ENCODE measurements at regions of chr6 and their contacts with region 1.

Region 1: GRCh38 chr6:157034436-157035230 is 257.5 kb downstream of the ARID1B start:
- DNase-seq: peak in 6 of 9 donors; percentile 43 to 57 (median 52)
- ATAC-seq: peak; percentile 85
- H3K4me3 ChIP-seq: no peak overlapping the region
- H3K4me3 Mint-ChIP-seq: peak overlapping the region; percentile 44 to 99 (median 84)
- H3K27ac ChIP-seq: peak overlapping the region; percentile 77
- H3K27ac Mint-ChIP-seq: peak overlapping the region; percentile 44 to 95 (median 84)
- H3K4me1 ChIP-seq: peaks cover 6 to 20% of the 10 kb centered on the region in 2 donors
- H3K4me1 Mint-ChIP-seq: peaks cover 22 to 38% (median 27%) of the 10 kb centered on the region in 7 donors
- H3K27me3 ChIP-seq: no peaks in the 10 kb centered on the region
- H3K27me3 Mint-ChIP-seq: no peaks in the 10 kb centered on the region

Region 2: GRCh38 chr6:156916130-156916801 is 118.4 kb before region 1 on chr6:
- CTCF ChIA-PET with region 1: no interaction called
- POLR2A ChIA-PET with region 1: no interaction called
- intact Hi-C with region 1: no loop called
- DNase-seq: peak in 1 of 9 donors; percentile 12
- ATAC-seq: peak; percentile 31
- H3K4me3 ChIP-seq: no peak overlapping the region
- H3K4me3 Mint-ChIP-seq: peak overlapping the region in 7 of 10 donors; percentile 10 to 58 (median 29)
- H3K27ac ChIP-seq: no peak overlapping the region
- H3K27ac Mint-ChIP-seq: peak overlapping the region in 8 of 9 donors; percentile 16 to 83 (median 49)
- H3K4me1 ChIP-seq: peaks cover 4 to 21% of the 10 kb centered on the region in 2 donors
- H3K4me1 Mint-ChIP-seq: peaks cover 34 to 83% (median 78%) of the 10 kb centered on the region in 7 donors
- H3K27me3 ChIP-seq: no peaks in the 10 kb centered on the region
- H3K27me3 Mint-ChIP-seq: no peaks in the 10 kb centered on the region

Region 3: DNA sequence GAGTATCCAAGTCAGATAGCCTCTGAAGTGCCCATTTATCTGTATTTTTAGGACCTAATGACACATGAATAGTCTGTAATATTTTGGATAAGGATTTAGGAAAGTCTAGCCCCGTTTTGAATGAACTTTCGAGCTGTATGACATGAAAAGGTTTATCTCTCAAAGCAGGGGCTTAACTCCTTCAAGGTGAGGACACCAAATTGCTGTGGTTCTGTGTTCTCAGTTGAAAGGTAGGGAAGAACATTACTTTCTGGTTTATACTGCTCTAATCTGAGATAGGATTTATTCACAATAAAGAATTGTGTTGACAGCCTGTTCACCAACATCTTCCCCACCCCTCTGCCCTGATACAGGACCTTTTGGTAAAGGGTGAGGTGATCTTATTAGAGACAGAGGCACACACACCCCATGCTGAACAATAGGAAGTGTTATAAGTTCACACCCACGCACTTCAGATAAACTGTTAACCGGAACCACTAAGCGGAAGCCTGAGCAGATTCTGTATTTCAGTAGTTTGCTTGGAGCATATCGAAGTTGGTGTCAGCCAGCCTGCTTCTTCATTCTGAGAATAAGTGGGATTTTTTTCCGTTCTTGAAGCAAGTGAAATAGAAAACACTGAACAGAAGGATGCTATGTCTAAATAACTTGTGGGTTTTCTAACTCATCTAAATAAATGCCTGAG is 65.4 kb after region 1 on chr6:
- CTCF ChIA-PET with region 1: no interaction called
- POLR2A ChIA-PET with region 1: interaction called, 3 read pairs
- intact Hi-C with region 1: loop called (anchors 1 to 5 kb)
- DNase-seq: peak in 8 of 9 donors; percentile 40 to 64 (median 54)
- ATAC-seq: peak; percentile 97
- H3K4me3 ChIP-seq: peak overlapping the region; percentile 20
- H3K4me3 Mint-ChIP-seq: peak overlapping the region; percentile 8 to 89 (median 77)
- H3K27ac ChIP-seq: peak overlapping the region; percentile 60
- H3K27ac Mint-ChIP-seq: peak overlapping the region; percentile 85 to 95 (median 92)
- H3K4me1 ChIP-seq: peaks cover 22% of the 10 kb centered on the region in 2 donors
- H3K4me1 Mint-ChIP-seq: peaks cover 22 to 90% (median 79%) of the 10 kb centered on the region in 7 donors
- H3K27me3 ChIP-seq: no peaks in the 10 kb centered on the region
- H3K27me3 Mint-ChIP-seq: no peaks in the 10 kb centered on the region

Region 4: GRCh38 chr6:157143171-157143889 is 108.7 kb after region 1 on chr6:
- CTCF ChIA-PET with region 1: no interaction called
- POLR2A ChIA-PET with region 1: no interaction called
- intact Hi-C with region 1: loop called in 1 of 2 experiments (anchors 5 kb)
- DNase-seq: no peak
- ATAC-seq: peak; percentile 83
- H3K4me3 ChIP-seq: no peak overlapping the region
- H3K4me3 Mint-ChIP-seq: no peak overlapping the region
- H3K27ac ChIP-seq: no peak overlapping the region
- H3K27ac Mint-ChIP-seq: peak overlapping the region in 1 of 9 donors; percentile 20
- H3K4me1 ChIP-seq: peaks cover 0 to 15% of the 10 kb centered on the region in 2 donors
- H3K4me1 Mint-ChIP-seq: peaks cover 0 to 32% (median 7%) of the 10 kb centered on the region in 7 donors
- H3K27me3 ChIP-seq: no peaks in the 10 kb centered on the region
- H3K27me3 Mint-ChIP-seq: no peaks in the 10 kb centered on the region

Region 5: DNA sequence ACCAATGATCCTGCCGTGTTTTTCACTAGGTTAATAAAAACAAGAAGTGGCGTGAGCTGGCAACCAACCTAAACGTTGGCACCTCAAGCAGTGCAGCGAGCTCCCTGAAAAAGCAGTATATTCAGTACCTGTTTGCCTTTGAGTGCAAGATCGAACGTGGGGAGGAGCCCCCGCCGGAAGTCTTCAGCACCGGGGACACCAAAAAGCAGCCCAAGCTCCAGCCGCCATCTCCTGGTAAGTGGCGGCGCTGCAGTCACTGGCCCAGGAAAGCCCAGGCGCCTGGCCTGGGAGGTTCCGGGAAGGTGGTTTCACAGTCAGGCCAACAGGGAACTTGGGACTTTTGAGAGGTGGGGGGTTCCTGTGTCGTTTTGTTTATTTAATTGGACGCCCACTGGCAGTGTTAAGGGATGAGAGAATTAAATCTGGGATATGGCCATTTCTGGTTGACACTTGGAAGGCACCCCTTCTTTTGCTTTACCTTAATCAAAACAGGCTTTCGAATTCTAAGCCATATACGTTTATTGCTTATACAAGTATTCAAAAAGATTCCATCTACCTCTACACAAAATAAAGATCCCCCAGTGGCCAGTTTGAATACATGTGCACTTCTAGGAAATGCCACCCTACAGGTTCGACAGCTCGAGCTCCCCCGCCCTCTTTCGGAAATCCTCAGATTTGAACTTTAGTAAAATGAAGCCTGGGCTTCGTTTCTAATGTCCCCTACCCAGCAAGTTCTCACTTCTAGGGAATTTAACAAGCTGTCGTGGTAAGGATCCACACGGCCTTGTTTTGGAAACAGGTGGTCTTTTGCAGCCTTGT is 149.8 kb after region 1 on chr6:
- CTCF ChIA-PET with region 1: interaction called, 6 read pairs
- POLR2A ChIA-PET with region 1: interaction called, 3 read pairs
- intact Hi-C with region 1: loop called (anchors 1 kb)
- DNase-seq: peak; percentile 33 to 66 (median 58)
- ATAC-seq: peak; percentile 80
- H3K4me3 ChIP-seq: no peak overlapping the region
- H3K4me3 Mint-ChIP-seq: peak overlapping the region in 1 of 10 donors; percentile 27
- H3K27ac ChIP-seq: no peak overlapping the region
- H3K27ac Mint-ChIP-seq: peak overlapping the region in 6 of 9 donors; percentile 33 to 55 (median 48)
- H3K4me1 ChIP-seq: peaks cover 0 to 7% of the 10 kb centered on the region in 2 donors
- H3K4me1 Mint-ChIP-seq: peaks cover 11 to 32% (median 22%) of the 10 kb centered on the region in 7 donors
- H3K27me3 ChIP-seq: no peaks in the 10 kb centered on the region
- H3K27me3 Mint-ChIP-seq: no peaks in the 10 kb centered on the region

Region 6: DNA sequence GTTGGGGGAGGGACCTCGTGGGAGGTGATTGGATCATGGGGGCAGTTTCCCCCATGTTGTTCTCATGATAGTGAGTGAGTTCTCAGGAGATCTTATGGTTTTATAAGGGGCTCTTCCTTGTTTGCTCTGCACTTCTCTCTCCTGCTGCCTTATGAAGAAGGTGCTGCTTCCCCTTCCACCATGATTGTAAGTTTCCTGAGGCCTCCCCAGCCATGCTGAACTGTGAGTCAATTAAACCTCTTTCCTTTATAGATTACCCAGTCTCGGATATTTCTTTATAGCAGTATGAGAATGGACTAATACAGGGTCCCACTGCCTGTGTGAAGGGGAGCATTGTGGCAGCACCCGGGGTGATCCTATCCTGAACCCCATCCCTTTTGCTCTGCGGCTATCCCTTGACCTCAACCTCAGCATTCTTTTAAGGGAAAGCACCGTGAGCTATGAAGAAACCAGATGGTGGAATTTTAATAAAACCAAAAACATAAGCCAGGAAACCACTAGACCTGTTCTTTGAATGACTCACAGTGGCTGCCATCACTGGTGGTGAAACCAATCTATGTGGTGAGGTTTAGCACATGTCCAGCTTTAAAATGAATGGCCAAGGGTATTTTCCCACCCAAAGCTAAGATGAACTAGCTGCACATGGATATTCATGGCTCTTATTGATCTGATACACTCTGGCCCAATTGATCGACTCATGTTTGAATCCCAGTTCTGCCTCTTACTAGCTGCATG is 408.6 kb after region 1 on chr6:
- CTCF ChIA-PET with region 1: no interaction called
- POLR2A ChIA-PET with region 1: no interaction called
- intact Hi-C with region 1: no loop called
- DNase-seq: no peak
- ATAC-seq: no peak
- H3K4me3 ChIP-seq: no peak overlapping the region
- H3K4me3 Mint-ChIP-seq: no peak overlapping the region
- H3K27ac ChIP-seq: no peak overlapping the region
- H3K27ac Mint-ChIP-seq: peak overlapping the region in 1 of 9 donors; percentile 51
- H3K4me1 ChIP-seq: no peaks in the 10 kb centered on the region
- H3K4me1 Mint-ChIP-seq: peaks cover 0 to 11% (median 0%) of the 10 kb centered on the region in 7 donors
- H3K27me3 ChIP-seq: no peaks in the 10 kb centered on the region
- H3K27me3 Mint-ChIP-seq: no peaks in the 10 kb centered on the region